Calu3 (cell line): ENCODE measurements at regions of chr15 and their contacts with region 1.

Region 1: GRCh38 chr15:45587095-45587860 is at the start of gene BLOC1S6:
- DNase-seq: peak; percentile 88
- H3K4me3 Mint-ChIP-seq: peak within 1 kb of the TSS; percentile 78
- H3K27ac Mint-ChIP-seq: peak within 1 kb of the TSS; percentile 99
- H3K4me1 Mint-ChIP-seq: peaks cover 18% of the 10 kb centered on the region
- H3K27me3 Mint-ChIP-seq: no peaks in the 10 kb centered on the region
- CTCF ChIP-seq: no peak
- total RNA-seq, gene BLOC1S6: 27.7 and 35.0 TPM in 2 replicates

Region 2: DNA sequence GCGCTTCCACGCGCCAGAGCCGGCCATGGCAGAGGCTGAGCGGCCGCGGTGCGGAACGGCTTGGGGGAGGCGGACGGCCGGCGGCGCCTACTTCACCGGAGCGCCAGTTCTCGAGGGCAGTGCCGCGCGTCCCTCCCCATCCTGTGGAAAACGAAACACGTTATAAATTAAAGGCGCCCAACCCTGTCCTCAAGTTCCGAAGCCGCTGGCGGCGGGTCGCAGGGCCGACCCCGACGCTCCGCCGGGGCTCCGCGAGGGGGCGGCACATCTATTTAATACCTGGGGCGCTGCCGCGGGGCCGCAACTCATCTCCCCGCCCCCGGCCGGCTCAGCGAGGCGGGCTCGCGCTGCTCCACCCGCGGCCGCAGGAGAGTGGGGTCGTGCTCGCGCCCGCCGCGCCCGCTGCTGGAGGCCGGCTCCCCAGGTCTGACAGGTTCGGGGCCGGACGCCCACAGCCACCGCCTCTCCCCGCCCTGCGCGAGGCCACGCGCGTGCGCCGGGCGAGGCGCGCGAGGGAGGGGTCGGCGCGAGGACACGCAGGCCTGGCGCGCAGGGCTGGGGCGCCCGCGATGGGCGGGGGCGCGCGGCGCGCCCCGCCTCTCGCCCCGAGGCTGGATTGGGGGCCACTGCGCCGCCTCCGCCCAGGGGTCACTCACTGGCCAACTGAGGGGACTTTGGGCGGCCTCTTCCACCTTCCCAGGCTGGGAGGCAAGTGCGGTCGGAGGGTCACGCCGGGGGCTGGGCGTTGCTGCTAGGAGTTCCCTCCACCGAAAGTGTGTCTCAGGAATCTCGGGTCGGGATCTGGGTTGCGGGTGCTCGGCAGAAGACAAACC is 64.7 kb before region 1 on chr15 and contains the start of gene SLC30A4:
- CTCF ChIA-PET with region 1: interaction called, 3 read pairs
- intact Hi-C with region 1: loop called (anchors 5 kb)
- DNase-seq: peak; percentile 56
- H3K4me3 Mint-ChIP-seq: peak within 1 kb of the TSS; percentile 78
- H3K27ac Mint-ChIP-seq: peak within 1 kb of the TSS; percentile 45
- H3K4me1 Mint-ChIP-seq: peaks cover 23% of the 10 kb centered on the region
- H3K27me3 Mint-ChIP-seq: no peaks in the 10 kb centered on the region
- CTCF ChIP-seq: no peak
- total RNA-seq, gene SLC30A4: 2.0 and 2.3 TPM in 2 replicates

Region 3: GRCh38 chr15:45535486-45536042 is 51.7 kb before region 1 on chr15:
- CTCF ChIA-PET with region 1: no interaction called
- intact Hi-C with region 1: loop called (anchors 5 kb)
- DNase-seq: peak; percentile 4
- H3K4me3 Mint-ChIP-seq: no peak overlapping the region
- H3K27ac Mint-ChIP-seq: no peak overlapping the region
- H3K4me1 Mint-ChIP-seq: peaks cover 17% of the 10 kb centered on the region
- H3K27me3 Mint-ChIP-seq: no peaks in the 10 kb centered on the region
- CTCF ChIP-seq: no peak